Activated CD4-positive, alpha-beta T cell treated with anti-CD3 and anti-CD28 coated beads for 36 hours (primary cell): ENCODE measurements at regions of chr20 and their contacts with region 1.

Region 1: GRCh38 chr20:23889775-23890211 is 10.2 kb upstream of the CST5 start:
- DNase-seq: peak; percentile 86
- ATAC-seq: peak; percentile 99
- H3K4me3 Mint-ChIP-seq: no peak overlapping the region
- H3K27ac Mint-ChIP-seq: no peak overlapping the region
- H3K4me1 Mint-ChIP-seq: peaks cover 3% of the 10 kb centered on the region
- H3K27me3 Mint-ChIP-seq: no peaks in the 10 kb centered on the region

Region 2: GRCh38 chr20:23668477-23668951 is 221.3 kb before region 1 on chr20:
- CTCF ChIA-PET with region 1: no interaction called
- POLR2A ChIA-PET with region 1: no interaction called
- intact Hi-C with region 1: loop called in 1 of 2 experiments (anchors 5 kb)
- DNase-seq: peak; percentile 66
- ATAC-seq: peak; percentile 68
- H3K4me3 Mint-ChIP-seq: no peak overlapping the region
- H3K27ac Mint-ChIP-seq: no peak overlapping the region
- H3K4me1 Mint-ChIP-seq: no peaks in the 10 kb centered on the region
- H3K27me3 Mint-ChIP-seq: no peaks in the 10 kb centered on the region

Region 3: DNA sequence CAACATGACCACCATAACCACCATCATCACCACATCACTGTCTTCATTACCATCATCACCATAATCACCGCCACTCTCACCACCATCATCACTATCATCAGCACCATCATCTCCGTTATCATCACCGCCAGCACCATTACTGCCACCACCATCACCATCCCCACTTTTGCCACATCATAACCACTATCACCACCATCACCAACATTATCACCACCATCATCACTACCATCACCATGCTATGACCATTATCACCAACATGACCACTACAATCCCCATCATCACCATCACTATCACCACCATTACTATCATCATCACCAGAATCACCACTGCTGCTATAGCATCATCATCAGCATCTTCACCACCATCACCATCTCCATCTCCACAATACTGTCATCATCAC is 88.9 kb before region 1 on chr20:
- CTCF ChIA-PET with region 1: no interaction called
- POLR2A ChIA-PET with region 1: no interaction called
- intact Hi-C with region 1: loop called in 1 of 2 experiments (anchors 5 kb)
- DNase-seq: no peak
- ATAC-seq: no peak
- H3K4me3 Mint-ChIP-seq: no peak overlapping the region
- H3K27ac Mint-ChIP-seq: no peak overlapping the region
- H3K4me1 Mint-ChIP-seq: no peaks in the 10 kb centered on the region
- H3K27me3 Mint-ChIP-seq: peaks cover 3% of the 10 kb centered on the region

Region 4: GRCh38 chr20:23857962-23858565 is 31.7 kb before region 1 on chr20:
- CTCF ChIA-PET with region 1: no interaction called
- POLR2A ChIA-PET with region 1: no interaction called
- intact Hi-C with region 1: no loop called
- DNase-seq: no peak
- ATAC-seq: no peak
- H3K4me3 Mint-ChIP-seq: no peak overlapping the region
- H3K27ac Mint-ChIP-seq: no peak overlapping the region
- H3K4me1 Mint-ChIP-seq: no peaks in the 10 kb centered on the region
- H3K27me3 Mint-ChIP-seq: peaks cover 2% of the 10 kb centered on the region

Region 5: GRCh38 chr20:23970049-23970448 is 80.3 kb after region 1 on chr20:
- CTCF ChIA-PET with region 1: interaction called, 3 read pairs
- POLR2A ChIA-PET with region 1: no interaction called
- intact Hi-C with region 1: loop called in 1 of 2 experiments (anchors 5 kb)
- DNase-seq: no peak
- ATAC-seq: no peak
- H3K4me3 Mint-ChIP-seq: no peak overlapping the region
- H3K27ac Mint-ChIP-seq: no peak overlapping the region
- H3K4me1 Mint-ChIP-seq: no peaks in the 10 kb centered on the region
- H3K27me3 Mint-ChIP-seq: peaks cover 4% of the 10 kb centered on the region

Region 6: DNA sequence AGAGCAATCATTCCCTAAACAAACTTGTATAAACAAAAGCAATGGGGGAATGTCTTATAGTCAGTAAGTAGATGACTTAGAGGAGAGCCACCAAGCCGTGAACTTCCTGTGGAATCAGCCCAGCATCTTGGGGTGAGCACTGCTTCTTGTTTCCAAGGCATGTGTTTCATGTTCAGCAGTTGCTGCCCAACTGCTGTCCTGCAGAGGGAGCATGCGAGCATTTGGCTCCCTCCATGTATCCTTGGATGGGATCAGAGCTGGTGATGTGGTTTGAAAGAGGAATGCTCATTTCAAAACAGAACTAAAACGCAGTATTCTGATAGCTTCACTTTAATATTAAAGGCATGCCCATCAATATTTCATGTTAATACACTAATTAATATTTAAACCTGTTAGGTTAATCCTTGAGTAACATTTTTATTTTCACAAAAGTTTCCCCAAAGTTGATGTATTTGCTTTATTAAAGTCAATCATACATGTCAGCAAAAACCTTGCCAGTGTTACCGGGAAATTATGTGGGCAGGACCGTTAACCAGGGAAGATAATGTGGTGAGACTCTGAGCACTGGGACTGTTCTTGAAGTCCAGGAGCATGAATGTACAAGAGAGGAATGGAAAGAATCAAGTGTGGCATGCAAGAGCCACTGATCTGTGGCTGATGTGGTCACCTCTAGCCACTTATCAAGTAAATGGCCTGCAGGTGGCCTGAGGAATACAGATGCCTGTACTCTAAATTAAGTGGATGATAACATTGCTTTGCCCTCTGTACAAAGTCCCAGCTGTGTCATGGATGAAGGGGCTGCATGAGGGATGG is 271.0 kb after region 1 on chr20:
- CTCF ChIA-PET with region 1: no interaction called
- POLR2A ChIA-PET with region 1: no interaction called
- intact Hi-C with region 1: loop called in 1 of 2 experiments (anchors 5 kb)
- DNase-seq: peak; percentile 55
- ATAC-seq: no peak
- H3K4me3 Mint-ChIP-seq: no peak overlapping the region
- H3K27ac Mint-ChIP-seq: no peak overlapping the region
- H3K4me1 Mint-ChIP-seq: no peaks in the 10 kb centered on the region
- H3K27me3 Mint-ChIP-seq: no peaks in the 10 kb centered on the region